Breast epithelium (tissue), 4 donors: ENCODE measurements at regions of chr18 and their contacts with region 1.

Region 1: GRCh38 chr18:11310476-11311086 is 161.2 kb upstream of the PIEZO2 start:
- DNase-seq: no peak
- H3K4me3 ChIP-seq: no peak overlapping the region
- H3K27ac ChIP-seq: no peak overlapping the region
- H3K4me1 ChIP-seq: no peaks in the 10 kb centered on the region
- H3K27me3 ChIP-seq: no peaks in the 10 kb centered on the region
- CTCF ChIP-seq: peak in 1 of 3 donors; percentile 16
- POLR2A ChIP-seq: no peak

Region 2: DNA sequence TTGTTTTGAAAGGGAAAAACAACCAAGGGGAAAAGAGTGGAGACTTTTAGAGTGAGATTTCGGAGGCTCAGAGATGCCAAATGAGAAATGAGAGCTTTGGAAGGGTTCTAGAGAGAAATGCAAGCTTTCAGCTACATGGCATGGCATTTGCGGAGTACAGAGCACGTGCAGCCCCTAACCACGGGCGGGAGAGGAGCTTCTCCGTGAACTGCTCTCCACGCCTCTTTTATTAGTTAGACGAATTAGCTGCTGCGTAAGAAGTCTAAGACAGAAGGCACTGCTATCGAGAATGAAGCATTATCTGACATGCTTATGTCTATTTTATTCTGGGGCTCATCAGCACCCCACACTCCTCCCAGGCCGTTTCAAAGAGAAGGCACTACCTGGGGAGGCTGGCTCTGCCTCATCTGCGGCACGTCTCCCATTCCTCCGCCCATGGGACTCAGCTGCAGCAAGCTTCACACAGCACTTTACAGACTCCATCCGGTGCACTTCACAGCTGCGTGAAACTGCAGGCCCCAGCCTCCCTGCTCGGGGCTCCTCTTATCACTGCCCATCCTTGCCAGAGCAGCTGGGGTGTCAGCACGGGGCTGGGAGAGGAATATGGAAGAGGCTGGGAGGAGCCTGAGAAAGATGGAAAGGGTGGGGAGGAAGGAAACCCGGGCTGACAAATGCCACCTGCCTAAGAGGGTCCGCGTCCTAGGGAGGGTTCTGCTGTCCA is 1063.4 kb before region 1 on chr18:
- intact Hi-C with region 1: loop called (anchors 5 kb)
- DNase-seq: no peak
- H3K4me3 ChIP-seq: no peak overlapping the region
- H3K27ac ChIP-seq: no peak overlapping the region
- H3K4me1 ChIP-seq: no peaks in the 10 kb centered on the region
- H3K27me3 ChIP-seq: no peaks in the 10 kb centered on the region
- CTCF ChIP-seq: no peak
- POLR2A ChIP-seq: no peak